ENCODE measurements at regions of chrX and their contacts with region 1.

Region 1: GRCh38 chrX:79366873-79367749 is at the start of gene ITM2A:
- DNase-seq: peak; percentile 76
- H3K4me3 Mint-ChIP-seq: peak within 1 kb of the TSS; percentile 86
- H3K27ac Mint-ChIP-seq: peak within 1 kb of the TSS; percentile 93
- H3K4me1 Mint-ChIP-seq: peaks cover 39% of the 10 kb centered on the region
- H3K27me3 Mint-ChIP-seq: no peaks in the 10 kb centered on the region
- total RNA-seq, gene ITM2A: 99.5 to 116 TPM

Region 2: GRCh38 chrX:79096145-79096556 is 271.0 kb before region 1 on chrX:
- CTCF ChIA-PET with region 1: no interaction called
- intact Hi-C with region 1: loop called (anchors 5 kb)
- DNase-seq: no peak
- H3K4me3 Mint-ChIP-seq: peak overlapping the region; percentile 68
- H3K27ac Mint-ChIP-seq: peak overlapping the region; percentile 94
- H3K4me1 Mint-ChIP-seq: peaks cover 71% of the 10 kb centered on the region
- H3K27me3 Mint-ChIP-seq: no peaks in the 10 kb centered on the region

Region 3: DNA sequence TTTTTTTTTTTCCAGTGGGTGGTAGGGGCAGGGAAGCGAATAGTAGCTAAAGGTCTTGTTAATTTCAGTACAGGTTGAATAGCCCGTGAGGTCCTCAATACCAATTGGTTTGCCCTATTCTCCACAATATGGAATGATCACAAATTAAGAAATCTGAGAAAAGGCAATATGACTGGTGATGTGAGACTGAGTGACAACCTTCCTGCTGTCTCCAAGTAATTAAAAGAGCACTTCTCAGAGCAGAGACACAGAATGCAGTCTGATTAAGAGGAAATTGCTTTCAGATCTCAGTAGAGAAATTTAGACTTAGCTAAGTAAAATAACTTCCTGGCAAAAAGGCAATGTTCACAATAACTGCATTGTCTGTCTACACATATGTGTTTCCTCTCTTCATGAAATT is 199.6 kb before region 1 on chrX:
- CTCF ChIA-PET with region 1: no interaction called
- intact Hi-C with region 1: loop called (anchors 5 kb)
- DNase-seq: no peak
- H3K4me3 Mint-ChIP-seq: peak overlapping the region; percentile 63
- H3K27ac Mint-ChIP-seq: peak overlapping the region; percentile 92
- H3K4me1 Mint-ChIP-seq: peaks cover 74% of the 10 kb centered on the region
- H3K27me3 Mint-ChIP-seq: no peaks in the 10 kb centered on the region

Region 4: GRCh38 chrX:79336869-79337815 is 30.0 kb before region 1 on chrX:
- CTCF ChIA-PET with region 1: no interaction called
- intact Hi-C with region 1: loop called (anchors 2 kb)
- DNase-seq: no peak
- H3K4me3 Mint-ChIP-seq: peak overlapping the region; percentile 65
- H3K27ac Mint-ChIP-seq: peak overlapping the region; percentile 74
- H3K4me1 Mint-ChIP-seq: peaks cover 29% of the 10 kb centered on the region
- H3K27me3 Mint-ChIP-seq: no peaks in the 10 kb centered on the region

Measured in activated naive CD4-positive, alpha-beta T cell treated with anti-CD3 and anti-CD28 coated beads for 36 hours (primary cell).